ENCODE measurements at regions of chr9 and their contacts with region 1.

Region 1: DNA sequence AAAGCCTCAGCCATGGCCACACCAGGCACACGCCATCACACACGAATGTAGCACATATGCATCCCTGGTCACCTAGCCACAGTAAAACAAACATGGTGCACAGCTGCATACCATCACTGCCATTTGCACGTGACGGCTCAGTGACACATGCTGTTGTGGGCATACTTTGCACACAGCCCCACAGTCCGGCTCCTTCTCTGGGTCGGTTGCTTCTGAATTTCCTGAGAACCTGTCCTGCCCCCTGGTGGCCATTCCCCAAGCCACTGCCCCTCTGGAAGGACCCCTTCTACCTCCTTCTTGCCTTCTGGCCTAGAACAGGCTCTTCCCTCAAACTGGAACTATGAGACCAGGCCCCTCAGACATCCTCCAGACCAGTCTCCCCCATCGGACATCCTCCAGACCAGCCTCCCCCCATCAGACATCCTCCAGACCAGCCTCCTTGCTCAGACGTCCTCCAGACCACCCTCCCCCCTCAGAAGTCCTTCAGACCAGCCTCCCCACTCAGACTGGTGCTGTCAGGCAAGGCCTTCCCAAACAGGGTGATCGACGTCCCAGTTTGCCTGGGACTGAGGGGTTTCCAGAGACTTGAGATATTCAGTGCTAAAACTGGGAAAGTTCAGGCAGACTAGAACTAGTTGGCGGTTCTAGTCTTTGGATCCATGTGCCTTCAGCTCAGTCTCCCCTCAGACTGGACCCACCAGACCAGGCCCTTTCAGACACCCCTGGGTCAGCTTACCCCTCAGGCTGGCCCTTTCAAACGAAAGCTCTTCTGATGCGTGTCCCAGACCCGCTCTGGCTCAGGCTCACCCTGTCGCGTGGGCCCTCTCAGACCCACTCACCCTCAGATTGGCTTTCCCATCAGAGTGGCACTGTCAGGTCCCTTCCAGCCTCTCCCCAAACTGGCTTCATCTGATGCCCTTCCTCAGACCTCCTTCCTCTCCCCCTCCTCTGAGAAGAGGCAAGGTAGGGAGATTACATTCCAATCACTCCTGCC is 24.3 kb upstream of the ENHO start:
- DNase-seq: peak; percentile 41
- H3K27ac ChIP-seq: no peak overlapping the region
- CTCF ChIP-seq: peak; percentile 70

Region 2: GRCh38 chr9:34484682-34485081 is 62.4 kb before region 1 on chr9:
- CTCF ChIA-PET with region 1: no interaction called
- POLR2A ChIA-PET with region 1: no interaction called
- DNase-seq: no peak
- H3K27ac ChIP-seq: no peak overlapping the region
- CTCF ChIP-seq: no peak

Region 3: GRCh38 chr9:34603610-34604231 is 56.6 kb after region 1 on chr9:
- CTCF ChIA-PET with region 1: interaction called, 12 read pairs
- POLR2A ChIA-PET with region 1: no interaction called
- DNase-seq: peak; percentile 87
- H3K27ac ChIP-seq: no peak overlapping the region
- CTCF ChIP-seq: peak; percentile 98

Measured in RWPE1 (cell line).